ENCODE measurements at regions of chr11 and their contacts with region 1.

Region 1: GRCh38 chr11:11117730-11118129 is 235.3 kb downstream of the CSNK2A3 start:
- DNase-seq: no peak
- ATAC-seq: no peak
- H3K4me3 ChIP-seq: no peak overlapping the region
- H3K27ac ChIP-seq: no peak overlapping the region
- H3K4me1 ChIP-seq: no peaks in the 10 kb centered on the region
- H3K27me3 ChIP-seq: peaks cover 7% of the 10 kb centered on the region; the same call in 1 of the 2 replicates
- CTCF ChIP-seq: no peak

Region 2: DNA sequence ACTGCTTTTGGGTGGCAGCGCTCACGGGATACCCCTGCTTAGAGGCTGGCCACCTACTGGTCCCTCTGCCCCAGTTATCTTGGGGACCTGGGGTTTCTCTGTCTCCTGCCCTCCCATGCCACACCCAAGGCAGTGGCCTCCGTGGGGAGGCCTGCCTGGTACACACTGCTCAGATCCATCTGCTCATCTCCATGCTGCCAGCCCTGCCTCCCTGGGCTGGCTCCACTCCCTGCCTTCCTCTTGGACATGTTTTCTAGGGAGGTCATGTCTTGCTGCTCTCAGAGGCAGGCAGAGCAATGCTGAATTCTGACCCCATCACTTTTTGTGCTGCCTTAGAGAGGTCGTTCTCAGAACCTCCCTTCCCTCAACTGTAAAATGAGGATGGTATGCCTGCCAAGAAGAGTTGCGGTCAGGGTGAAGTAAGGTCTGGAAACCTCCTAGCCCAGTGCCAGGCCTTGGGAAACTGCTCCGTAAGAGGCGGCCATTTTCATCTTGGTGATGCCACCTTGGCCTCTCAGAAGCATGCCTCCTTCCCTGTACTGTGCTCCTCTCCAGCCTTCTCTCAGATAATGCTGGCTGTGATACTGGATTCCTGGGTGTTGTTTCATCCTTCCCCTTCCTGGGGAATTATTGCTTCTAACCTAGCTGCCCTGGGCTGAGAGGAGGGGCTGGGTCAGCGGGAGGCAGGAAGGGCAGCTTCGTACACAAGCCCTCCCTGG is 73.4 kb before region 1 on chr11:
- CTCF ChIA-PET with region 1: interaction called, 10 read pairs
- POLR2A ChIA-PET with region 1: no interaction called
- in situ Hi-C with region 1: no loop called
- intact Hi-C with region 1: no loop called
- DNase-seq: no peak
- ATAC-seq: no peak
- H3K4me3 ChIP-seq: no peak overlapping the region
- H3K27ac ChIP-seq: no peak overlapping the region
- H3K4me1 ChIP-seq: no peaks in the 10 kb centered on the region
- H3K27me3 ChIP-seq: no peaks in the 10 kb centered on the region
- CTCF ChIP-seq: no peak